ENCODE measurements at regions of chr11 and their contacts with region 1.

Region 1: DNA sequence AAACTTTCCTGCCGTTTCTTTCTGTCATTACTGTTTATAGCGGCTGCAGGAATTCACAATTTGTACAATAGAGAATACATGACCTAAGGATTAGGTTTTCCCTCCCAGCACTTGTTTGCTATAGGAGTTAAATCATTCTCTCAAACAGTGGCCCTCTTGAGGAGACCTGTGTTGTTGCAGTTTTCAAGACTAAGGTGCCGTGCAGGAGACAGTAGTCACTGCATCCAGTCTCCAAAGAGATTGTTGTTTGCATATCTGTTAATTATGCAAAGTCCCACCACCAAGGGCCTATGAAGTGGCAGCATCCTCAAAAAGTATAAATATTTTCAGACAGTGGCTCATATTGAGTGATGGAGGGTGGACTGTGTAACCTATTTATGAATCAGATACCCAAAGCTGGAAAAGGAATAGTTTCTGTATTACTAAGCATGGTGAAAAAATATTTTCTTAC is 2.3 kb downstream of the PRSS23 start:
- DNase-seq: peak; percentile 53

Region 2: DNA sequence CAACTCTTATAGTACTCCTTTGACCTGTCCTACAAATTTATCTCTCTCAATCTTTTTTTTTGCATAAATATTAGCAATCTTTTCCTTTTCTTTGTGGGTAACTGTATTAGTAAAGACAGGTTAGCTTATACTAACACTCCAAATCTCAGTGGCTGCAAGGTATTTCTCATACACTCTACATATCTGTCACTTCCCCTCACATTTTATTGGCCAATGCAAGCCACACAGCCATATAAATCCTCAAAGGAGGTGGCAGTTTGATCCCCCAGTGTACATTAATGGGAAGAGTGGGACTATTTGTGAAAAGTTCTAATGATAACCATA is 600.7 kb before region 1 on chr11:
- CTCF ChIA-PET with region 1: no interaction called
- POLR2A ChIA-PET with region 1: no interaction called
- DNase-seq: no peak

Region 3: DNA sequence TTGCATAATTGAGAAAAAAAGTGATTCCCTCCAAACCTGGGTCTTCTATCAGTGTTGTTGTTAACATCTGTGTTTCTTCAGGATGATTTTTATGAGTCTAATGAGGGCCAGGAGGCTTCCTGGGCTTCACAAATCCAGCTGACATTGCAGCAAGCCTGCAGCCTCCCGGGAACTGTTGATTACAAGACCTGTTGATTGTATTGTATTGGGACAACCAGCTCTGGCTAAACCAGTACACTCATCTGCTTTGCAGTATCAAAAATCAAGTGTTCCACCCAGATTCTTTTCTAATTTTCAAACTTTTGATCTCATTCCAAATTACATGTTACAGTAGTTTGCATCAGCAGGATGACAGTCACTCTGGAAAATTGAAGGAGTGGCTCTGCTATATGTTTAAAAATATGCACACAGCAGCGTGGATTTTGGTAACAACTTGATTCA is 18.4 kb before region 1 on chr11:
- CTCF ChIA-PET with region 1: interaction called, 4 read pairs
- POLR2A ChIA-PET with region 1: interaction called, 39 read pairs
- DNase-seq: no peak

Region 4: GRCh38 chr11:86790073-86790727 is 12.4 kb before region 1 on chr11:
- CTCF ChIA-PET with region 1: interaction called, 4 read pairs
- POLR2A ChIA-PET with region 1: interaction called, 39 read pairs
- DNase-seq: peak; percentile 19

Region 5: GRCh38 chr11:86814775-86815174 is 12.1 kb after region 1 on chr11:
- CTCF ChIA-PET with region 1: interaction called, 6 read pairs
- POLR2A ChIA-PET with region 1: interaction called, 10 read pairs
- DNase-seq: no peak

Region 6: DNA sequence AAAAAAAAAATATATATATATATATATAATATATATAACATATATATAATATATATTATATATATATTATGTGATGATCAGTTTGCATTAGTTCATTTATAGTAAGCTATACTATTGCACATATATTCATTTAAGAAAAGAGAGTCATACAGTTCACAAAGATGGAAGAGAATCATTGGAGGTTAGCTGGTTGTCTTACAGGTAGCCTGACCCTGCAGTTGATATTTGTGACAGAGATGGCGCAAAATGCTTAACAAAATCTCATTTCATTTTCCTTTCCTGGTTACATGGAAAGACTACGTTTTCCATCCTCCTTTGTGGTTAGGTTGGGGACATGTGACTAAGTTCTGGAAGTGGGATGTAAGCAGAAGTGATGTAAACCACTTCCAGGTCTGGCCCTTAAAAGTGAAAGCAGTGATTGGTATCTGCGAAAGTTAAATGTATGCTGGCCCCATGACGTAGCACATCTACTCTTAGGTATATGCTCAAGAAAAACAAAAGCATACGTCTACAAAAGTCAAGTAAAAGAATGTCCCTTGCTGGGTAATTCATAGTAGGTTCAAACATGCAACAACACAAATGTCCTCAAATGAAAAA is 227.9 kb after region 1 on chr11:
- CTCF ChIA-PET with region 1: no interaction called
- POLR2A ChIA-PET with region 1: no interaction called
- DNase-seq: no peak